ENCODE measurements at regions of chr17 and their contacts with region 1.

Region 1: GRCh38 chr17:49575579-49576087 is at the start of gene NXPH3:
- DNase-seq: peak in 3 of 10 donors; percentile 45 to 84 (median 72)
- H3K4me3 ChIP-seq: peak within 1 kb of the TSS; percentile 45 to 84 (median 71)
- H3K27ac ChIP-seq: peak within 1 kb of the TSS in 53 of 59 donors; percentile 14 to 89 (median 70)
- H3K27me3 ChIP-seq: no peaks in the 10 kb centered on the region
- CTCF ChIP-seq: peak in 41 of 56 donors; percentile 7 to 80 (median 42)
- total RNA-seq, gene NXPH3: 8.9 to 36.3 (median 18.6) TPM

Region 2: GRCh38 chr17:49515196-49515770 is 60.4 kb before region 1 on chr17:
- intact Hi-C with region 1: no loop called
- DNase-seq: peak in 9 of 10 donors; percentile 42 to 93 (median 70)
- H3K4me3 ChIP-seq: peak overlapping the region in 2 of 59 donors; percentile 4 to 22
- H3K27ac ChIP-seq: peak overlapping the region in 57 of 59 donors; percentile 12 to 88 (median 77)
- H3K27me3 ChIP-seq: peaks cover 0 to 4% (median 0%) of the 10 kb centered on the region in 45 donors
- CTCF ChIP-seq: peak in 18 of 56 donors; percentile 10 to 34 (median 18)

Region 3: DNA sequence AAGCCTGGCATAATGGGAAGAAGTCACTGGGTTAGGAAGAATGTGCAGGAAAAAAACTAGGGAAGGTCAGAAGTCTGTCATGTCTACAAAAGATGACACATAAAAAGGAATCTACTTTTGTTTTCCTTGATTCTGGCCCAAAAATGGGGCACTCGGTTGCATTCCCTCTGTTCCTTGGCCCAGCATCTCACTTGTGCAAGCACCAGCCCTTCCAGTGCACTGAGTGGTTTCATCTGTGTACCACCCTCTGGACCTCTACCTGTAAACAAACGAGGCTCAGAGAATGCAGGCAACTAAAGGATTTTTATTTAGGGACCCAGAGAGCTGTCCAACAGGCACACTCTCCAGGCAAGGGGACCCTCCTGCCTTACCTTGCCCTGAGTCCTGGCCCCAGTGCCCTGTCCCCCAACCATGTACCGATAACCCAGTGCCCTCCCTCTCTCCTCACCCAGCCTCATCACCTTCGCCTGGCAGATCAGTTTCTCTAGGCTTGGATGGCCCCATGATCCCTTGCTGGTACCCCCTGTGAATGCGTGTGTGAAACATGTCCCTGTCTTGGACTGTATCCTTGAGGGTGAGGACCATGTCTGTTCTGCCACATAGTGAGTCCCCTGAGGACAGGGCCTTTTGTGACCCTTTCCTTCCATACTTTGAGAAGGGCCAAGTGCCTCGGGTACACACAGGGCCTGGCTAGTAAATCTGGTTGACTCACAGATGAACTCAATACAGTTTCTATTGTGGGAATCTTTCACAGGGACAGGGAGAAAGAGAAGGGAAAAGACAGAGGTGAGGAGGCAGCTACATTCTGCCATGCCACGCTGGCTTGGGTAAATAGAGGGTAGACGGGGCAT is 13.3 kb after region 1 on chr17:
- intact Hi-C with region 1: no loop called
- DNase-seq: no peak
- H3K4me3 ChIP-seq: no peak overlapping the region
- H3K27ac ChIP-seq: peak overlapping the region in 1 of 59 donors; percentile 83
- H3K27me3 ChIP-seq: no peaks in the 10 kb centered on the region
- CTCF ChIP-seq: no peak

Region 4: GRCh38 chr17:49603720-49604119 is 28.1 kb after region 1 on chr17:
- intact Hi-C with region 1: no loop called
- DNase-seq: no peak
- H3K4me3 ChIP-seq: no peak overlapping the region
- H3K27ac ChIP-seq: peak overlapping the region in 22 of 59 donors; percentile 1 to 71 (median 16)
- H3K27me3 ChIP-seq: no peaks in the 10 kb centered on the region
- CTCF ChIP-seq: peak in 2 of 56 donors; percentile 6 to 14

Region 5: GRCh38 chr17:49616601-49617131 is 41.0 kb after region 1 on chr17:
- intact Hi-C with region 1: loop called (anchors 5 kb)
- DNase-seq: peak in 9 of 10 donors; percentile 24 to 77 (median 53)
- H3K4me3 ChIP-seq: peak overlapping the region in 1 of 59 donors; percentile 10
- H3K27ac ChIP-seq: peak overlapping the region in 35 of 59 donors; percentile 3 to 67 (median 38)
- H3K27me3 ChIP-seq: no peaks in the 10 kb centered on the region
- CTCF ChIP-seq: no peak

Region 6: GRCh38 chr17:49677933-49678847 is 102.6 kb after region 1 on chr17 and contains the start of gene SPOP:
- intact Hi-C with region 1: loop called (anchors 2 to 5 kb)
- DNase-seq: peak; percentile 98 to 100 (median 99)
- H3K4me3 ChIP-seq: peak within 1 kb of the TSS; percentile 48 to 94 (median 75)
- H3K27ac ChIP-seq: peak within 1 kb of the TSS; percentile 84 to 100 (median 98)
- H3K27me3 ChIP-seq: no peaks in the 10 kb centered on the region
- CTCF ChIP-seq: peak in 12 of 56 donors; percentile 6 to 34 (median 19)
- total RNA-seq, gene SPOP: 75.2 to 140 (median 105) TPM

Region 7: DNA sequence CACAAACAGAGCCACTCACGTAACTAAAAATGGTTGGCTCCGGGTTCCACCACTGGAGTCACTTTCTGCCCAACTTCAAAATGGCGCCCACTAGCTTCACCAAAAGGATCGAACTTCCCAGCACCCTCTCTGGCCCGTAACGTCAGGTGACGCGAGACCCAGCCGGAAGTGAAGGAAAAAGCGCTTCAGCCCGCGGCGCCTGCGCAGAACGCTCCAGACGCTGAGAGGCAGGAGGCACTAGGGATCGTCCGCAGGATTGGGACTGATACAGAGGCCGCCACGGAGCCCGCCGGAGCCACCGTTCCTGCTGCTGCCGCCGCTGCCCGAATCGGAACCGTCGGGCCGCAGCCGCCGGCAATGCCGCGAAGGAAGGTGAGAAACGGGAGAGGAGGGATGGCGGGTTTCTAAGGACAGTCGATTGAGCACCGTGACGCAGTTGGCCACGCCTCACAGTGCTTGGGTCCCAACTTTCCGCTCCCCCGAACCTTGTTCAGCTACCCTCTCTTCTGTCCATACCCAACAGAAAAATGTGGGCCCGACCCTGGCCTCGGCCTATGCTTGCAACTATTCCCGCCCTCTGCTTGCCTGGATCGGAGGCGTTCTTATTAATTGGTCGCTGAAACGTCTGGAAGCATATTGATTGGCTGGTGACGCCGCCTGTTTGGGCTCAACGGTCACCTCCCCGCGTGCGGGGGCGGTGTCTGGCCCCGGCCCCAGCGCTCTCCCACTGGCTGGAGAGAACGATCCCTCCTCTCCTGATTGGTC is 213.0 kb after region 1 on chr17 and contains the start of gene KAT7:
- intact Hi-C with region 1: loop called in 1 of 2 experiments (anchors 5 kb)
- DNase-seq: peak; percentile 96 to 100 (median 99)
- H3K4me3 ChIP-seq: peak within 1 kb of the TSS; percentile 68 to 100 (median 99)
- H3K27ac ChIP-seq: peak within 1 kb of the TSS; percentile 86 to 100 (median 99)
- H3K27me3 ChIP-seq: no peaks in the 10 kb centered on the region
- CTCF ChIP-seq: peak in 54 of 56 donors; percentile 21 to 73 (median 54)
- total RNA-seq, gene KAT7: 73.9 to 129 (median 102) TPM

Region 8: GRCh38 chr17:49843774-49844350 is 268.2 kb after region 1 on chr17:
- intact Hi-C with region 1: no loop called
- DNase-seq: no peak
- H3K4me3 ChIP-seq: no peak overlapping the region
- H3K27ac ChIP-seq: no peak overlapping the region
- H3K27me3 ChIP-seq: no peaks in the 10 kb centered on the region
- CTCF ChIP-seq: peak in 1 of 56 donors; percentile 6

Measured in dorsolateral prefrontal cortex (tissue), 120 donors.